ENCODE measurements at regions of chr1 and their contacts with region 1.

Region 1: DNA sequence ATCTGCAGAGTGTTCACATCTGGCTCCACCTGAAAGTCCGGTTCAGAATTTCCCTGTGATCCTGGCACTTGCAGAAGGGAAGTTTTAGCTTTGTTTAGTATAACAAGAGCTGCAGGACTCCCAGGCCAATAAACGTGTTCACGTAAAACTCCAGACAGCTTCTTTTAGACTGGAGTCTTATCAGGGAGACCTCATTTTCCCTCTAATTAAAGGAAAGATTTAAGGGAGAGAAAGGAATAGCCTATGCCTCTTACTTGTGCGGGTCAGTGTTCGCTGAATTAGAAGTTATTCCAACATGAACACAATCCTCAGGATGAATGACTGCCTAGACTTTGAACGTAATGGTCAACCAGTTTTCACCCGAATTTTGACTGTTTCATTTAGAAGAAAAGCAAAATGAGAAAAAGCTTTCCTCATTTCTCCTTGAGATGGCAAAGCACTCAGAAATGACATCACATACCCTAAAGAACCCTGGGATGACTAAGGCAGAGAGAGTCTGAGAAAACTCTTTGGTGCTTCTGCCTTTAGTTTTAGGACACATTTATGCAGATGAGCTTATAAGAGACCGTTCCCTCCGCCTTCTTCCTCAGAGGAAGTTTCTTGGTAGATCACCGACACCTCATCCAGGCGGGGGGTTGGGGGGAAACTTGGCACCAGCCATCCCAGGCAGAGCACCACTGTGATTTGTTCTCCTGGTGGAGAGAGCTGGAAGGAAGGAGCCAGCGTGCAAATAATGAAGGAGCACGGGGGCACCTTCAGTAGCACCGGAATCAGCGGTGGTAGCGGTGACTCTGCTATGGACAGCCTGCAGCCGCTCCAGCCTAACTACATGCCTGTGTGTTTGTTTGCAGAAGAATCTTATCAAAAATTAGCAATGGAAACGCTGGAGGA is 202.1 kb upstream of the SGIP1 start:
- DNase-seq: peak; percentile 20 to 55 (median 39)
- ATAC-seq: peak; percentile 35
- H3K4me3 ChIP-seq: peak overlapping the region; percentile 86
- H3K4me3 Mint-ChIP-seq: peak overlapping the region; percentile 90 to 99 (median 98)
- H3K27ac ChIP-seq: peak overlapping the region; percentile 92
- H3K27ac Mint-ChIP-seq: peak overlapping the region; percentile 95 to 100 (median 98)
- H3K4me1 ChIP-seq: peaks cover 31 to 36% of the 10 kb centered on the region in 2 donors
- H3K4me1 Mint-ChIP-seq: peaks cover 26 to 76% (median 58%) of the 10 kb centered on the region in 7 donors
- H3K27me3 ChIP-seq: no peaks in the 10 kb centered on the region
- H3K27me3 Mint-ChIP-seq: no peaks in the 10 kb centered on the region

Region 2: DNA sequence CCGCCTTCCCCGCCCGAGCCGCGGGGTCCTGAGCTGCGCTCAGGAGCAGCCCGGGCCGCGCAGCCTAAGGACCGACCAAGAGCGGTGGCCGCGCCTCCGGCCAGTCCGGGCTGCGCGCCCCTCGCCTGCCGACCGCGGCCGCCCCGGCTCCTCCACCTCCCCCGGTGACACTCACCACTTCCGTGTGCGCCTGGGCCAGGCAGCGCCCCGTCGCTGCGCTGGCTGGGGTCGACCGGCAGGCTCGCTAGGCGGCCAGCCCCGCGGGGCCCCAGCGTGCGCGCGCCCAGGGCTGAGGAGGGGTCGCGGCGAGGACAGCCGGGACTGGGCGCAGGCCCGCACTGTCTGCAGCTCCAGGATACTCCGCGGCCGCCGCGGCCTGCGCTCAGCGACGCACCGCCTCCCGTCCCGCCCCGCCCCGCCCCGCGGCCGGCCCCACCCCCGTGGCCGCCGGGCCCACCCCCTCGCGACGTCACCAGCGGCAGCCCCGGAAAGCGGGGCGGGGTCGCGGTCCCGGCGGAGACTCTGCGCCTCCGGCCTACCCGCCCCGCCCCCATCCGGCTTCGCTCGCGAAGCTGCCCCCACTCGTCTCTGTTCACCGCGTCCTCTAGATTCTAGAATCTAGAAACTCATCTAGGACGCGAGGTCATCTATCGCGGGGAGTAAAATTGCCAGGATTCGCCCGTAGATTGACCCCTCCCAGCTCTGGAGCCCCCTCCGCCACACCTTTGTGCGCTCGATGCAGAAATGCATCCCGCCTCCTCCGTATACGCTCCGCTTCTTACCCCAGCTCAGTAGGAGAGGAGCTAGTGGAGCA is 1365.5 kb before region 1 on chr1 and contains the start of gene JAK1:
- CTCF ChIA-PET with region 1: no interaction called
- POLR2A ChIA-PET with region 1: interaction called, 3 read pairs
- intact Hi-C with region 1: loop called in 1 of 2 experiments (anchors 5 kb)
- DNase-seq: peak; percentile 79 to 94 (median 91)
- ATAC-seq: peak; percentile 91
- H3K4me3 ChIP-seq: peak within 1 kb of the TSS; percentile 93
- H3K4me3 Mint-ChIP-seq: peak within 1 kb of the TSS; percentile 90 to 97 (median 94)
- H3K27ac ChIP-seq: peak within 1 kb of the TSS; percentile 97
- H3K27ac Mint-ChIP-seq: peak within 1 kb of the TSS; percentile 91 to 99 (median 97)
- H3K4me1 ChIP-seq: peaks cover 31 to 41% of the 10 kb centered on the region in 2 donors
- H3K4me1 Mint-ChIP-seq: peaks cover 37 to 55% (median 49%) of the 10 kb centered on the region in 7 donors
- H3K27me3 ChIP-seq: no peaks in the 10 kb centered on the region
- H3K27me3 Mint-ChIP-seq: peaks cover 0 to 3% (median 0%) of the 10 kb centered on the region in 5 donors
- total RNA-seq, gene JAK1: 210 to 365 (median 265) TPM

Region 3: DNA sequence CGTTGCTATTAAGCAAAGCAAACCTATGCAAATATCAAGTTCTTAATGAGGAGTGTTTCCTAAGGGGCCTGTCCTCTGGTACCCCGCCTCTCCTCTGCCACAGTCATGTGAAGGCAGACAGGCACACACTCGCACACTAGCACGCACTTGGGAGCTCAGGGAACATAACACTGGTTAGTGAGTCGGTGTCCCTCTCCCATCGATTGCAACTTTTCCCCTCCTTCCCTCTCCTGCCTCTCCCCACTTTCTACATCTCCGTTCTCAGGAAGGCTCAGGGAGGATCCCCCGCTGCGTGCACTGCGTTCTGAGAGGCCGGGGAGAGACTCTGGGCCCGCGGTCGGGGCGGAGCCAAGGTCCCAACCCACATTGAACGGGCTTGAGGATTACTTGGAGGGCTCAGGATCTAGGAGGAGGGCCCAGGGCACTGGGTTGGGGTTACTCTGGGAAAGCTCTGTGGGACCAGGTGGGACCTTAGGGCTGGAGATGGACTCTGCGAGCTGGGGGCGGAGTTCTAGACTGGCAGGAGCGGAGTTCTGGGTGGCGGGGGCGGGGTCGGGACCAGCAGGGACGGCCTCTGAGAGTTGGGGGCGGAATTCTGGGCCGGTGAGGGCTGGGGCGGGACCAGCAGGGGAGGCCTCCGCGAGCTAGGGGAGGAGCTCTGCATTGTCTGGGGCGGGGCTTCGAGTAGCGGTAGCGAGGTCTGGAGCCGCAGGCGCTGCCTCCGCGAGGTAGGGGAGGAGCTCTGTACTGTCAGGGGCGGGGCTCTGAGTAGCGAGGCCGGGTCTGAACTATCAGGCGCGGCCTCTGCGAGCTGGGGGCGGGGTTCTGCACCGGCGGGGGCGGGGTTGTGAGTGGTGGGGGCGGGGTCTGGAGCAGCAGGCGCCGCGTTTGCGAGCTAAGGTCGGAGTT is 912.0 kb before region 1 on chr1:
- CTCF ChIA-PET with region 1: no interaction called
- POLR2A ChIA-PET with region 1: no interaction called
- intact Hi-C with region 1: loop called in 1 of 2 experiments (anchors 10 kb)
- DNase-seq: peak; percentile 93 to 99 (median 98)
- ATAC-seq: peak; percentile 97
- H3K4me3 ChIP-seq: peak overlapping the region; percentile 86
- H3K4me3 Mint-ChIP-seq: no peak overlapping the region
- H3K27ac ChIP-seq: peak overlapping the region; percentile 78
- H3K27ac Mint-ChIP-seq: peak overlapping the region in 7 of 9 donors; percentile 84 to 97 (median 95)
- H3K4me1 ChIP-seq: peaks cover 0 to 8% of the 10 kb centered on the region in 2 donors
- H3K4me1 Mint-ChIP-seq: peaks cover 0 to 31% (median 22%) of the 10 kb centered on the region in 7 donors
- H3K27me3 ChIP-seq: no peaks in the 10 kb centered on the region
- H3K27me3 Mint-ChIP-seq: peaks cover 0 to 12% (median 0%) of the 10 kb centered on the region in 5 donors

Region 4: DNA sequence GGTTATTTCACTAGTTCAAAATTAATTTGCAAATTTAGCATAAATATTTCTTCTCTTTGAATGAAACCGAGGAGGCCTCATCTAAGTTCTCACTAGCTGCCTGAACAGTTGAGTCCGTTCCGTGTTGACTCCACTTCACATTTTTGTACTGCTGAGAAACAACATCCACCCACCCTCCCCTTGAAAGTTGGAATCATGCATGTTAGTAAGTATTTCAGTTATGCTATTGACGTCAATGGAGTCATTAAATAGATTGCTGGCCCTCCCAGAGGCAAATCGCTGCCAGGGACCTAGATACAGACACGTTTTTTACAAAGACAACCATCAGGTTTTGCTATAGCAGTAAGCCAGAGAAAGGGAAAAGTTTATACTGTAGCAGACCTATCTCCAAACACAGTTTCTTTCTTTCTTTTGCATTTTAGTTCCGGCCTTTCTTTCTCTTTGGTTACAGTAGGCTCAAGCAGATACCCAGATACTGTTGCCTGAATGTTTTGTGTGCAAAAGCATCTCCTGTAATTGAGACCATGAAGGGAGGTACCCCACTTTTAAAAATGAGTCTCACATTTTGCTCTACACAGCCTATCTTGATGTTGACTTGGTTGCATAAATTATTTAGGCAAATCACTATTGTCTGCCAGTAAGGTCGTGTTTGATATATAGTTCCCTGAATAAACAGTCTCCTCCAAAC is 60.5 kb before region 1 on chr1:
- CTCF ChIA-PET with region 1: interaction called, 15 read pairs
- POLR2A ChIA-PET with region 1: interaction called, 97 read pairs
- intact Hi-C with region 1: loop called (anchors 1 kb)
- DNase-seq: peak in 7 of 9 donors; percentile 43 to 72 (median 64)
- ATAC-seq: peak; percentile 64
- H3K4me3 ChIP-seq: no peak overlapping the region
- H3K4me3 Mint-ChIP-seq: peak overlapping the region in 9 of 10 donors; percentile 22 to 69 (median 33)
- H3K27ac ChIP-seq: peak overlapping the region; percentile 59
- H3K27ac Mint-ChIP-seq: peak overlapping the region; percentile 60 to 92 (median 87)
- H3K4me1 ChIP-seq: peaks cover 30 to 43% of the 10 kb centered on the region in 2 donors
- H3K4me1 Mint-ChIP-seq: peaks cover 36 to 69% (median 54%) of the 10 kb centered on the region in 7 donors
- H3K27me3 ChIP-seq: no peaks in the 10 kb centered on the region
- H3K27me3 Mint-ChIP-seq: no peaks in the 10 kb centered on the region

Region 5: DNA sequence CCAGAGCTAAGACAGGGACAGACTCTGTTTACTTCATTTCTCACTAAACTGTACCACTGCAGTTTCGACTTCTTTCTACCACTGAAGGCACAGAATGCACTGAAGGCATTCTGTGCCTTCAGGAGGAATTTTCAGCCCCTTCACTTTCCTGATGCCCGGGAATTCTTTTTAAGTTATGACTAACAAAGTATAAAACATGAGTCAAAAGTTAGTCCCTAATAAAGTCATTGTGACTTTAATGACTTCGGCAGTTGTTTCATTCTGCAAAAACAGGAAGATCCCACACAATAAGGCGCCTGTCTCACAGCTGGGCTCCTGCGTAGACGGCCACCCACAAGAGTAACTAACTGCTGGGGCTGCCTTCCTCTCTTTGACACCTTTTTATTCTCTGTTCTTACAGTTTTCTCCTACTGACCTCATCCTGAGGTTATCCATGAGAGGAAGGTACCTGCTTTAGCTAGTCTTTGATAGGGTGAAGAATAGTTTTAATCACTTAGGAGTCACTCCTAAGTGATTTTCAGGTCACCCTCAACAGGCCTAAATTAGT is 18.2 kb after region 1 on chr1:
- CTCF ChIA-PET with region 1: interaction called, 6 read pairs
- POLR2A ChIA-PET with region 1: interaction called, 49 read pairs
- intact Hi-C with region 1: loop called (anchors 1 kb)
- DNase-seq: peak in 7 of 9 donors; percentile 55 to 77 (median 71)
- ATAC-seq: peak; percentile 84
- H3K4me3 ChIP-seq: peak overlapping the region; percentile 33
- H3K4me3 Mint-ChIP-seq: peak overlapping the region; percentile 70 to 86 (median 77)
- H3K27ac ChIP-seq: peak overlapping the region; percentile 62
- H3K27ac Mint-ChIP-seq: peak overlapping the region; percentile 81 to 95 (median 90)
- H3K4me1 ChIP-seq: peaks cover 74 to 78% of the 10 kb centered on the region in 2 donors
- H3K4me1 Mint-ChIP-seq: peaks cover 66 to 100% (median 96%) of the 10 kb centered on the region in 7 donors
- H3K27me3 ChIP-seq: no peaks in the 10 kb centered on the region
- H3K27me3 Mint-ChIP-seq: no peaks in the 10 kb centered on the region

Region 6: DNA sequence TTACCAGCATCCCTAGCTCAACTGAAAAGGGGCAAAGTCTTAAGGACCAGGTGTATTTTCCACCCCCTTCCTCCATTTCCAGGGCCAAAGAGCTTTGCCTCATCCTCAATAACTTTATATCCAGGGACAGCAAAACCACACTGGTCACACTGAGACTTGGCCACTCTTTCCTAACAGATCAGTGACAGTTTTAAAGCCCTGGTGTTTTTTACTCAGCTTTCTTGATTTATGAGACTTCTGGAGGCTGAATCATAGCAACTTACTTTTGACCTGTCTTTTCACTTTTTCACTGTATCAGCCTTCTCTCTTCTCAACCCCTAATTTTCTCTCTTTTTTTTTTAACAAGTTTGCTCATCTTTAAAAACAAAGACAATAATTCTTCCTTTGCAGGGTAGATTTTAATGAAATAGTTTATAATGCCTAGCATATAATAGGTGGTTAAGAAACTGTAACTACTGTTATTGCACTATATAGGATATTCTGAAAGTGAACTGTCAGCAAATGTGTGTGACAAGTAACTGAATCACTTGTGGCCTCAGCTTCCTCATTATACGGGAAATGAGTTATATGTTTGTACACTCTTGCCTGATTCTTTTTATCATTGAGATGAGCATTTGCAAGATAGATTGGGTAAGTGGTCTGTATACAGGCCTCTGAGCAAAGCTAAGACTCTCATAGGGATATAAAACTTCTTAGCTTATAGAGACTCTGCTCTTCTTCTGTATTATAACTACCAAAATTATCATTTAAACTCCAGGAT is 400.7 kb after region 1 on chr1:
- CTCF ChIA-PET with region 1: no interaction called
- POLR2A ChIA-PET with region 1: no interaction called
- intact Hi-C with region 1: no loop called
- DNase-seq: no peak
- ATAC-seq: peak; percentile 83
- H3K4me3 ChIP-seq: no peak overlapping the region
- H3K4me3 Mint-ChIP-seq: no peak overlapping the region
- H3K27ac ChIP-seq: no peak overlapping the region
- H3K27ac Mint-ChIP-seq: peak overlapping the region in 4 of 9 donors; percentile 6 to 85 (median 16)
- H3K4me1 ChIP-seq: peaks cover 0 to 3% of the 10 kb centered on the region in 2 donors
- H3K4me1 Mint-ChIP-seq: peaks cover 8 to 21% (median 14%) of the 10 kb centered on the region in 7 donors
- H3K27me3 ChIP-seq: no peaks in the 10 kb centered on the region
- H3K27me3 Mint-ChIP-seq: peaks cover 0 to 1% (median 0%) of the 10 kb centered on the region in 5 donors

Region 7: DNA sequence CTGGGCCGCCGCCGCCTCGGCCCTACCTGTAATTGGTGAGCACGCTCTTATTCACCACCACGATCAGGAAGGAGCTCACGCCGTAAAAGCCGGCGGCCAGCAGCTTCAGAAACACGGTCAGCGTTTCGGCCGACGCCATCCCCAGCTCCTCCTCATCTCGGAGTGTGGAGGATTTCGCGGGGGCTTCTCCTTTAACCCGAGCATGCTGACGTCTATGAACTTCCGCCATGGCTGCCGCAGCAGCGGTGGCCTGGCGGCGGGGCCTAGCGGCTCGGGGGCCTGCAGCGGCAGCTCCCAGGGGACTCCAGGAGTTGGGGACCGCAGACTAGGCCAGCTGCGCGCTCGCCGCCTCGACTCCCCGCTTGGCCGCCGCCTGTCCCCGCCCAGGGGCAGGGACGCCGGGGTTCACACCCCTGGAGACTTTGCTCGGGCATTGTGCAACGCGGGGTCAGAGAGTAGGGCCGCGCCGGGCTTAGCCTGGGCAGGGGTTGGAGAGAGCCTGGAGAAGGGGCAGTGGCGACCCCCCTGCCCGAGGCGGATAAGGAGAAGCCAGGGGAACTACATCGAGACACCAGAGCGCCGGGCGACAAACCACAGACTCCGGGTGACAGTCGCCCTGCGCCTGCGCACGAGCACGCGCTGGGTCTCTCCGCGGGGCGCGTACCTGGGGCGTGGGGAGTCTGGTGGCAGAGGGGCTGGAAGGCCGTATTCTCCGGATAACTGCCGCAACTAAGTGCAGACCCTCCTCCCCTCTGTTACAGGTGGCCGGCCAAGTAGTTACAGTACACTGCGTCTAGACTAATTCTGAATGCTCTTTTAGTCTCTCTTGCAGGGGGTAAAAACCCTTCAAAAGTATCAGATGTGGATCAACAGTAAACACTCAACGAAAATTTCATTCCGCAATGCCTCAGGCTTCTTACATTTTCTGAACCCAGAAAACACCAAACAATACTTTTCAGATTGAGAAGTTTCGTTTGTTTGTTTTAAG is 722.2 kb after region 1 on chr1 and contains the start of gene SLC35D1:
- CTCF ChIA-PET with region 1: no interaction called
- POLR2A ChIA-PET with region 1: no interaction called
- intact Hi-C with region 1: loop called (anchors 5 to 10 kb)
- DNase-seq: peak; percentile 65 to 88 (median 76)
- ATAC-seq: peak; percentile 86
- H3K4me3 ChIP-seq: peak within 1 kb of the TSS; percentile 87
- H3K4me3 Mint-ChIP-seq: peak within 1 kb of the TSS; percentile 90 to 97 (median 95)
- H3K27ac ChIP-seq: peak within 1 kb of the TSS; percentile 96
- H3K27ac Mint-ChIP-seq: peak within 1 kb of the TSS; percentile 80 to 99 (median 94)
- H3K4me1 ChIP-seq: peaks cover 6 to 13% of the 10 kb centered on the region in 2 donors
- H3K4me1 Mint-ChIP-seq: peaks cover 17 to 37% (median 30%) of the 10 kb centered on the region in 7 donors
- H3K27me3 ChIP-seq: no peaks in the 10 kb centered on the region
- H3K27me3 Mint-ChIP-seq: peaks cover 0 to 9% (median 0%) of the 10 kb centered on the region in 5 donors
- total RNA-seq, gene SLC35D1: 9.8 to 25.7 (median 15.4) TPM

Region 8: DNA sequence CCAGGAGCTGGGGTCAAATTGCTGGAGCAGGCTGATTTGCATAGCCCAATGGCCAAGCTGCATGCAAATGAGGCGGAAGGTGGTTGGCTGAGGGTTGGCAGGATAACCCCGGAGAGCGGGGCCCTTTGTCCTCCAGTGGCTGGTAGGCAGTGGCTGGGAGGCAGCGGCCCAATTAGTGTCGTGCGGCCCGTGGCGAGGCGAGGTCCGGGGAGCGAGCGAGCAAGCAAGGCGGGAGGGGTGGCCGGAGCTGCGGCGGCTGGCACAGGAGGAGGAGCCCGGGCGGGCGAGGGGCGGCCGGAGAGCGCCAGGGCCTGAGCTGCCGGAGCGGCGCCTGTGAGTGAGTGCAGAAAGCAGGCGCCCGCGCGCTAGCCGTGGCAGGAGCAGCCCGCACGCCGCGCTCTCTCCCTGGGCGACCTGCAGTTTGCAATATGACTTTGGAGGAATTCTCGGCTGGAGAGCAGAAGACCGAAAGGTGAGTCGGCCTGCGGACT is 1353.2 kb after region 1 on chr1 and contains the start of gene GADD45A:
- CTCF ChIA-PET with region 1: no interaction called
- POLR2A ChIA-PET with region 1: no interaction called
- intact Hi-C with region 1: loop called in 1 of 2 experiments (anchors 10 kb)
- DNase-seq: peak; percentile 80 to 96 (median 94)
- ATAC-seq: peak; percentile 93
- H3K4me3 ChIP-seq: peak within 1 kb of the TSS; percentile 69
- H3K4me3 Mint-ChIP-seq: peak within 1 kb of the TSS; percentile 90 to 99 (median 98)
- H3K27ac ChIP-seq: peak within 1 kb of the TSS; percentile 59
- H3K27ac Mint-ChIP-seq: peak within 1 kb of the TSS; percentile 77 to 98 (median 93)
- H3K4me1 ChIP-seq: peaks cover 9 to 16% of the 10 kb centered on the region in 2 donors
- H3K4me1 Mint-ChIP-seq: peaks cover 20 to 42% (median 26%) of the 10 kb centered on the region in 7 donors
- H3K27me3 ChIP-seq: no peaks in the 10 kb centered on the region
- H3K27me3 Mint-ChIP-seq: no peaks in the 10 kb centered on the region
- total RNA-seq, gene GADD45A: 15.0 to 70.4 (median 24.2) TPM

Measured in naive thymus-derived CD4-positive, alpha-beta T cell (primary cell).